ENCODE measurements at regions of chr9 and their contacts with region 1.

Region 1: DNA sequence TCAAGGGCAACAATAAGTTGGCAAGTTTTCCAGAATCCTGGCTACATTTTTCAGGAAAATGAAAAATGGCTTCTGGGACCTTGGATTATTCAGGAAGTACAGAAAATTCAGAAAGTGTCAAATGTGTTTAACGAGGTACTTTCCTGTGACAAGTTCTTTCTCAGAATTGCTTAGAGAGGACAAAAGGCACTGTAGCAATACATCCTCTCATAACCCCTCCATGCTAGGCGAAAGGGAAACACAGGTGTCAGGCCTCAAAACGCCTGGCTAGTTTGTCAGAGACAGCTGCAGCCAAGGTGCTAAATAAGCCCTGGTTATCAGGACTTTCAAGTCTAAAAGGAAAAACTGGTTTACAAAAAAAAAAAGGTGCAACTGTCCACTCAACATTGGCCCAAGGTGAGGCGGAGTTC is 115.2 kb downstream of the GNAQ start:
- DNase-seq: peak; percentile 24
- ATAC-seq: peak; percentile 89
- H3K4me3 ChIP-seq: no peak overlapping the region
- H3K27ac ChIP-seq: no peak overlapping the region; the same call in 1 of the 2 replicates
- H3K4me1 ChIP-seq: peaks cover 7% of the 10 kb centered on the region
- H3K27me3 ChIP-seq: no peaks in the 10 kb centered on the region
- CTCF ChIP-seq: no peak
- EP300 ChIP-seq: peak; percentile 72 to 86; a peak in 3 of 4 replicates
- POLR2A ChIP-seq: no peak
- RAD21 ChIP-seq: no peak

Region 2: GRCh38 chr9:77903666-77904285 is 12.6 kb before region 1 on chr9:
- CTCF ChIA-PET with region 1: interaction called, 44 read pairs
- POLR2A ChIA-PET with region 1: interaction called, 9 read pairs
- RAD21 ChIA-PET with region 1: interaction called, 7 read pairs
- SMC1A ChIA-PET with region 1: interaction called, 56 read pairs
- in situ Hi-C with region 1: no loop called
- intact Hi-C with region 1: no loop called
- DNase-seq: no peak
- ATAC-seq: no peak
- H3K4me3 ChIP-seq: no peak overlapping the region
- H3K27ac ChIP-seq: no peak overlapping the region
- H3K4me1 ChIP-seq: no peaks in the 10 kb centered on the region
- H3K27me3 ChIP-seq: no peaks in the 10 kb centered on the region
- CTCF ChIP-seq: no peak
- EP300 ChIP-seq: no peak
- POLR2A ChIP-seq: no peak
- RAD21 ChIP-seq: no peak

Region 3: GRCh38 chr9:77952642-77953328 is 36.4 kb after region 1 on chr9:
- CTCF ChIA-PET with region 1: interaction called, 4 read pairs
- POLR2A ChIA-PET with region 1: no interaction called
- RAD21 ChIA-PET with region 1: interaction called, 11 read pairs
- SMC1A ChIA-PET with region 1: interaction called, 15 read pairs
- in situ Hi-C with region 1: no loop called
- intact Hi-C with region 1: no loop called
- DNase-seq: no peak
- ATAC-seq: peak; percentile 15; the same call in 1 of the 3 replicates
- H3K4me3 ChIP-seq: no peak overlapping the region
- H3K27ac ChIP-seq: no peak overlapping the region
- H3K4me1 ChIP-seq: no peaks in the 10 kb centered on the region
- H3K27me3 ChIP-seq: no peaks in the 10 kb centered on the region
- CTCF ChIP-seq: no peak
- EP300 ChIP-seq: no peak
- POLR2A ChIP-seq: no peak
- RAD21 ChIP-seq: no peak